ENCODE measurements at regions of chr5 and their contacts with region 1.

Region 1: DNA sequence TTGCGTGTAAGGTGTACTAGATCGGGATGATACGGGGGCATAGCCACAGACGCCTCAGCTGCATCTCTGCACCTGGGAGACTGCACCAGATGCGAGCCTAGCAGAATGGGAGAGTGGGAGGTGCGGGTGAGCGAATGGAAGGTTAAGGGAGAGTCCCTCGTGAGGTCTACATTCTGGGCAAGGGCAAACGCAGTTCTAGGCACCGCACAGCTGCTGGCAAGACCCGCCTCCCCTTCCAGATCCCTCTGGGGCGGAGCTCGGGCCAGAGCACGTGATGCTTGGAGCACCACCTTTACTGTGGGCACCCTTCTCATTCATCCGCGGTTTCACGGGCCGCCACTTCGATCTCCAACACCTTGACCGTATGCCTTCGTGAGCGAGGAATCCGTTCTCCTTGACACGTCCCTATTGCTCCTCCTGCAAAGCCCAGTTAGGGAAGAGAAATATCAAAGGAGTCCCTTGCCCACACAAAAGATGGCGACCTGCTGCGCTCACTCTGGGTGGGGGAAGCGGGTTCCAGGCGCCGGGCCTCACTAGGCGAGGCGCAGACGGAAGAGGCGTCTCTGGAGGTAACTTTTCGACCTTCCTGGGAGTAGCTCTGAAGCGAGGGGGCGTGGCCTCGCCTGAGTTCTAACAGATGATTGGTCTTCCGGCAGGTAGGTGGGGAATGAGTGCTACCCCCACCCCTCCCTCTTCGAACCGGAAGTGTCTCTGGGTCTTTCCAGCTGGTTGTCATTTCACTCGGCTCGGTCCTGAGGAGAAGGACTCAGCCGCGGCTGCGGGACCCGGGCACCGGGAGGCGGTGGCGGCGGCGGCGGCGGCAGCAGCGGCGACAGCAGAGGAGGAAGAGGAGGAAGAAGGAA is at the start of gene CPEB4:
- DNase-seq: peak; percentile 89 to 98 (median 97)
- ATAC-seq: peak; percentile 97
- H3K4me3 ChIP-seq: peak within 1 kb of the TSS; percentile 70
- H3K4me3 Mint-ChIP-seq: peak within 1 kb of the TSS; percentile 91 to 99 (median 96)
- H3K27ac ChIP-seq: peak within 1 kb of the TSS; percentile 82
- H3K27ac Mint-ChIP-seq: peak within 1 kb of the TSS; percentile 94 to 100 (median 98)
- H3K4me1 ChIP-seq: peaks cover 49 to 60% of the 10 kb centered on the region in 2 donors
- H3K4me1 Mint-ChIP-seq: peaks cover 61 to 88% (median 78%) of the 10 kb centered on the region in 7 donors
- H3K27me3 ChIP-seq: no peaks in the 10 kb centered on the region
- H3K27me3 Mint-ChIP-seq: no peaks in the 10 kb centered on the region
- total RNA-seq, gene CPEB4: 12.6 to 40.4 (median 17.5) TPM

Region 2: GRCh38 chr5:172984243-172984953 is 903.4 kb before region 1 on chr5:
- CTCF ChIA-PET with region 1: no interaction called
- POLR2A ChIA-PET with region 1: no interaction called
- intact Hi-C with region 1: loop called in 1 of 2 experiments (anchors 5 kb)
- DNase-seq: peak; percentile 47 to 90 (median 82)
- ATAC-seq: peak; percentile 86
- H3K4me3 ChIP-seq: peak overlapping the region; percentile 64
- H3K4me3 Mint-ChIP-seq: peak overlapping the region; percentile 88 to 99 (median 97)
- H3K27ac ChIP-seq: peak overlapping the region; percentile 92
- H3K27ac Mint-ChIP-seq: peak overlapping the region; percentile 92 to 99 (median 98)
- H3K4me1 ChIP-seq: peaks cover 16 to 26% of the 10 kb centered on the region in 2 donors
- H3K4me1 Mint-ChIP-seq: peaks cover 20 to 71% (median 48%) of the 10 kb centered on the region in 7 donors
- H3K27me3 ChIP-seq: no peaks in the 10 kb centered on the region
- H3K27me3 Mint-ChIP-seq: no peaks in the 10 kb centered on the region

Region 3: DNA sequence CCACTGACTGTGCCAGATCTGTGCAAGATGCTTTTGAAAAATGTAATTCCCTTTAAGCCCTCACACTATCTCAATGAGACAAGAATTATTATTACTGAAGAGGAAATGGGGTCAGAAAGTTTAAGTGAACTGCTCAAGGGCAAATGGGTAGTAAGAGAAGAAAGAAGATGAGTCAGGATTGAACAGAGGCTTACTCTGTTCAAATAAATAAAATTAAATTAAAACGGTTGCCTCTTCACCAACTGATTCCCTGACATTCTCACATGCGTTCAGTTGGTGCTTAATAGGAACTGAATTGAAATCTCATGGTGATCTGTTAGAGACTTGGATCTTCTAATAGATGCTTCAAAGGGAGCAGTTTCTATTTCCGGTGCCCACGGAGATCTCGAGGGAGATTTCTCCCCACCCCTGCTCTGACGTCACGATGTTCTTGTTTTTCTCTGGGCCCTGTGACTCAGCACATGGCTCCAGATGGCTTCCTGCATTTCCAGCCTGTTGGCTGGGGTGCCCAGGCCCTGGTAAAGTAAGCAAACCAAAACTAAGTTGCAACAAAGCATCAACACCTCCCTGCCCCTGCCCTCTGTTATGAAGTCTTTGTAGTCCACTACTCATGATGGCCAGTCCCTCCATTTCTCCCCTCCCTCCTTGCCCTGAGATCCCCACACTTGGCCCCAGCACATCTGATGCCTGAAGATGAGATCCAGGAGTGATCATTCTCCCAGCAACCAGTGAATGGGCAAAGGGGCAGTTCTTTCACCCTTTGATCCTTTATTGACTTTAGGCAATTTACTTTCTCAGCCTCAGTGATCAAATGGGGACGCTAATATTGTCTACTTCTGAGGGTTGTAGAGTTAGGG is 105.8 kb before region 1 on chr5:
- CTCF ChIA-PET with region 1: no interaction called
- POLR2A ChIA-PET with region 1: no interaction called
- intact Hi-C with region 1: loop called in 1 of 2 experiments (anchors 2 kb)
- DNase-seq: peak; percentile 30 to 65 (median 59)
- ATAC-seq: peak; percentile 89
- H3K4me3 ChIP-seq: no peak overlapping the region
- H3K4me3 Mint-ChIP-seq: peak overlapping the region in 6 of 10 donors; percentile 1 to 46 (median 19)
- H3K27ac ChIP-seq: no peak overlapping the region
- H3K27ac Mint-ChIP-seq: peak overlapping the region; percentile 16 to 84 (median 79)
- H3K4me1 ChIP-seq: peaks cover 4 to 6% of the 10 kb centered on the region in 2 donors
- H3K4me1 Mint-ChIP-seq: peaks cover 7 to 26% (median 15%) of the 10 kb centered on the region in 7 donors
- H3K27me3 ChIP-seq: no peaks in the 10 kb centered on the region
- H3K27me3 Mint-ChIP-seq: peaks cover 0 to under 1% (median 0%) of the 10 kb centered on the region in 5 donors

Region 4: GRCh38 chr5:173917788-173918786 is 30.2 kb after region 1 on chr5:
- CTCF ChIA-PET with region 1: interaction called, 6 read pairs
- POLR2A ChIA-PET with region 1: interaction called, 76 read pairs
- intact Hi-C with region 1: loop called (anchors 1 kb)
- DNase-seq: peak; percentile 14 to 89 (median 78)
- ATAC-seq: peak; percentile 92
- H3K4me3 ChIP-seq: peak overlapping the region; percentile 65
- H3K4me3 Mint-ChIP-seq: no peak overlapping the region
- H3K27ac ChIP-seq: peak overlapping the region; percentile 82
- H3K27ac Mint-ChIP-seq: no peak overlapping the region
- H3K4me1 ChIP-seq: peaks cover 4 to 11% of the 10 kb centered on the region in 2 donors
- H3K4me1 Mint-ChIP-seq: peaks cover 0 to 21% (median 6%) of the 10 kb centered on the region in 7 donors
- H3K27me3 ChIP-seq: no peaks in the 10 kb centered on the region
- H3K27me3 Mint-ChIP-seq: no peaks in the 10 kb centered on the region

Region 5: GRCh38 chr5:174020397-174021296 is 132.8 kb after region 1 on chr5:
- CTCF ChIA-PET with region 1: no interaction called
- POLR2A ChIA-PET with region 1: no interaction called
- intact Hi-C with region 1: no loop called
- DNase-seq: no peak
- ATAC-seq: no peak
- H3K4me3 ChIP-seq: no peak overlapping the region
- H3K4me3 Mint-ChIP-seq: no peak overlapping the region
- H3K27ac ChIP-seq: no peak overlapping the region
- H3K27ac Mint-ChIP-seq: no peak overlapping the region
- H3K4me1 ChIP-seq: no peaks in the 10 kb centered on the region
- H3K4me1 Mint-ChIP-seq: peaks cover 0 to 4% (median 0%) of the 10 kb centered on the region in 7 donors
- H3K27me3 ChIP-seq: no peaks in the 10 kb centered on the region
- H3K27me3 Mint-ChIP-seq: peaks cover 10 to 47% (median 41%) of the 10 kb centered on the region in 5 donors

Region 6: DNA sequence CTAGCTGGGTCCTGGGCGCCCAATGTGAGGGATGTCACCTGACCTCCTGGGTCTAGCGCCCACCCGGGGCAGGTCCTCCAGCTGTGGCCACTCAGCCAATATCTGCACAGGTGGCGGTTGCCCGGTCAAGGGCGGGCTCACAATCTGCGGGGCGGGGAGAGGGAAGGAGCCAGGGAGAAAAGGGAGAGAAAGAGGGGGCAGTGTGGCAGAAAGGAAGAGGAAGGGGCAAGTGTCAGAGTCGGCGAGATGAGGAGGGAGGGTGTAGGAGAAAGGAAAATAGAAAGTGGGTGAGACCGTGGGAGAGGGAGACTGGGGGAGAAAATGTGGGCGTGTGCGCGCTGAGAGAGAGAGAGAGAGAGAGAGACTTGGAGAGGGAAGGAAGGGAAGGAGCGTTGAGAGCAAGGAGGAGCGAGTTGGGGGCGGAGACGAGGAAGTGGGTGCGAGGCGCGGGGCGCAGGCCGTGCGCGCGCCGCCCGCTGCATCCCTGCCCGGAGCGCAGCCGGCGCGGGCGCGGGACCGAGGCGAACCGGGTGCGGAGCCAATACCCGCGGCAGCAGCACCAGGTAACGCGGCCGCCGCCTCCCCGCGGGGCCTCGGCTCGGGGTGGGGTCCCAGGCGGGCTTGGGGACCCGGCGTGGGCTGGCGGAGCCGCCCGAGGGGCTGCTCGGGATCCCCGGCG is 1769.9 kb after region 1 on chr5 and contains the start of gene HRH2:
- CTCF ChIA-PET with region 1: no interaction called
- POLR2A ChIA-PET with region 1: no interaction called
- intact Hi-C with region 1: loop called in 1 of 2 experiments (anchors 10 kb)
- DNase-seq: peak; percentile 20 to 69 (median 46)
- ATAC-seq: peak; percentile 71
- H3K4me3 ChIP-seq: peak within 1 kb of the TSS; percentile 70
- H3K4me3 Mint-ChIP-seq: peak within 1 kb of the TSS; percentile 84 to 100 (median 96)
- H3K27ac ChIP-seq: peak within 1 kb of the TSS; percentile 71
- H3K27ac Mint-ChIP-seq: peak within 1 kb of the TSS; percentile 80 to 94 (median 88)
- H3K4me1 ChIP-seq: peaks cover 41 to 59% of the 10 kb centered on the region in 2 donors
- H3K4me1 Mint-ChIP-seq: peaks cover 77 to 98% (median 92%) of the 10 kb centered on the region in 7 donors
- H3K27me3 ChIP-seq: no peaks in the 10 kb centered on the region
- H3K27me3 Mint-ChIP-seq: peaks cover 0 to 2% (median 0%) of the 10 kb centered on the region in 5 donors
- total RNA-seq, gene HRH2: 5.6 to 26.3 (median 12.9) TPM

Measured in naive thymus-derived CD4-positive, alpha-beta T cell (primary cell).